Activated B cell treated with CpG ODN at 0.5 μM for 24 hours (primary cell): ENCODE measurements at regions of chr10 and their contacts with region 1.

Region 1: DNA sequence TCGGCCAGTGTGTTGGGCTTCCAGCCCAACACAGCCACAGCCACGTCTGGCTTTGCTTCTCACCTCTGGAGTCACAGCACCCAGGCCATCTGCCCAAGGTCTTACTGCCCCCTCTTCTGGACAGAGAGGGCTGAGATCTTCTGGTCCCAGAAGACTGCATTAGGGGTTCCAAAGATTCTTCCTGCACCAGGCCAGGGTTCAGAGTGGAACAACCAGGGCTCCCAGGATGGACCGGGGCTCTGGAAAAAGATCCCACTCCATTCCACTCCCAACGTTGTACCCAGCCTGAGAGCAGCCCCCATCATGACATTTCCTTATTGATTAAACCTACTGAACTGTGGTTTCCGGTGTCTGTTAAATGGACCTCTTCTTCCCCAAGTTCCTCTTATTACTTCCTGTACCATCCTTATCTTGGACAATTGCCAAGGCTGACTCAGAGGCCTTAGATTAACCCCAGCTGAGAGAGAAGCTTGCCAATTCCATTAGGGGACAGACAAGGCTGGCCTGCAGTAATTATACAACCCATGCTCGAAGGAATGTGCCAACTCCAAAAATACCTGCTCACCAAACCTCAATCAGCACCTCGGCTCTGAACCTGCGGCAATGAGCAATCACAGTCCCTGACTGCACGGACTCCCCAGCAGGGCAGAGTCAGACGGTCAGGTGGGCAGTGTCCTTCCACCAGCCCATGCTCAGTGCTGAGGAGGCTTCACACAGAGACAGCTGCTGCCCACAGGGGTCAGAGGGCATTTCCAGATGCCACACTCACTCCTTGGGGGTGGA is 47.9 kb upstream of the NPFFR1 start:
- DNase-seq: no peak
- ATAC-seq: peak; percentile 81
- H3K4me3 Mint-ChIP-seq: peak overlapping the region; percentile 56
- H3K27ac Mint-ChIP-seq: peak overlapping the region; percentile 63
- H3K4me1 Mint-ChIP-seq: peaks cover 30% of the 10 kb centered on the region
- H3K27me3 Mint-ChIP-seq: peaks cover 26% of the 10 kb centered on the region
- CTCF ChIP-seq: no peak

Region 2: DNA sequence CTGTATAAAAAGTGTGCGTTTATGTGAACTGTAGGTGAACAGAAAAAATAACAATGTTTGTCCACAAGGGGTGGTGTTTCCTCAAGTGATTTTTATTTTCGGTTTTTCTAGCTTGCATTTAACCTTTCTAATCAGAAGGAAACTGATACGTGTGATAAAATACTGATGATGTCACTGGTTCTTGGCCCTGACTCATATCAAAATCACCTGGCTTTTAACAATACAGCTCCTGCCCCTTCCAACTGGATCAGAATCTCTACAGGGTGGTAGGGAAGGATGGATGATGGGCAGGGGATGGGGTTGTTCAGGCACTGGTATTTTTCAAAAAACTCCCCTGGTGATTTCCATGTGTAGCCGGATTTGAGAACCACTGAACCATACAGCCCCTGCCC is 58.8 kb before region 1 on chr10:
- CTCF ChIA-PET with region 1: interaction called, 4 read pairs
- POLR2A ChIA-PET with region 1: no interaction called
- intact Hi-C with region 1: loop called (anchors 1 kb)
- DNase-seq: no peak
- ATAC-seq: peak; percentile 86
- H3K4me3 Mint-ChIP-seq: peak overlapping the region; percentile 57
- H3K27ac Mint-ChIP-seq: peak overlapping the region; percentile 83
- H3K4me1 Mint-ChIP-seq: peaks cover 33% of the 10 kb centered on the region
- H3K27me3 Mint-ChIP-seq: no peaks in the 10 kb centered on the region
- CTCF ChIP-seq: no peak

Region 3: GRCh38 chr10:70293169-70293813 is 38.4 kb before region 1 on chr10:
- CTCF ChIA-PET with region 1: no interaction called
- POLR2A ChIA-PET with region 1: no interaction called
- intact Hi-C with region 1: loop called (anchors 1 kb)
- DNase-seq: no peak
- ATAC-seq: peak; percentile 87
- H3K4me3 Mint-ChIP-seq: no peak overlapping the region
- H3K27ac Mint-ChIP-seq: peak overlapping the region; percentile 32
- H3K4me1 Mint-ChIP-seq: peaks cover 11% of the 10 kb centered on the region
- H3K27me3 Mint-ChIP-seq: no peaks in the 10 kb centered on the region
- CTCF ChIP-seq: no peak

Region 4: DNA sequence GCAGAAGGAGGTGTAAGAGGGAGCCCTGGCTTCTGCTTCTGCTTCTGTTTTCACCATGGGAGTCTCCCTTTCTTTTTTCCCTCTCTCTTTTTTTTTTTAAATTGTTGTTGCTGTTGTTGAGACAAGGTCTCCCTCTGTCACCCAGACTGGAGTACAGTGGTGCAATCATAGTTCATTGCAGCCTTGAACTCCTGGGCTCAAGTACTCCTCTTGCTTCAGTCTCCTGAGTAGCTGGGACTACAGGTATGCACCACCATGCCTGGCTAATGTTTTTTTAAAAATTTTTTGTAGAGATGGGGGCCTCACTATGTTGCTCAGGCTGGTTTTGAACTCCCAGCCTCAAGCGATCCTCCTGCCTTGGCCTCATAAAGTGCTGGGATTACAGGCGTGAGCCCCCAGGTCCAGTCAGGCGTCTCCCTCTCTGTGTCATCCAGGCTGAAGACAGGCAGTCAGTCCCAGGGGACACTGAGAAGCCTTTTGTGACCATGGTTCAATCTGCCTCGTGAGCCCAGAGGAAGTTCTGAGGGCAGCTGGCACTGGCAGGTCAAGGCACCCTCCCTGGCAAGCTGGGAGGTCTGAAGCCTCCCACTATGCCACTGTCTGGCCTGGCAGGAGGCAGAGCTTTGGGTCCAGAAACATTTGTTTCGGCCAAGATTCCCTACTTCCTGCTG is 14.3 kb before region 1 on chr10:
- CTCF ChIA-PET with region 1: no interaction called
- POLR2A ChIA-PET with region 1: interaction called, 10 read pairs
- intact Hi-C with region 1: loop called (anchors 1 kb)
- DNase-seq: no peak
- ATAC-seq: peak; percentile 72
- H3K4me3 Mint-ChIP-seq: no peak overlapping the region
- H3K27ac Mint-ChIP-seq: no peak overlapping the region
- H3K4me1 Mint-ChIP-seq: peaks cover 20% of the 10 kb centered on the region
- H3K27me3 Mint-ChIP-seq: no peaks in the 10 kb centered on the region
- CTCF ChIP-seq: no peak

Region 5: GRCh38 chr10:70355051-70356021 is 23.7 kb after region 1 on chr10:
- CTCF ChIA-PET with region 1: no interaction called
- POLR2A ChIA-PET with region 1: interaction called, 6 read pairs
- intact Hi-C with region 1: loop called (anchors 1 kb)
- DNase-seq: peak; percentile 36
- ATAC-seq: peak; percentile 78
- H3K4me3 Mint-ChIP-seq: peak overlapping the region; percentile 86
- H3K27ac Mint-ChIP-seq: peak overlapping the region; percentile 94
- H3K4me1 Mint-ChIP-seq: peaks cover 40% of the 10 kb centered on the region
- H3K27me3 Mint-ChIP-seq: no peaks in the 10 kb centered on the region
- CTCF ChIP-seq: no peak